ENCODE measurements at regions of chrX and their contacts with region 1.

Region 1: DNA sequence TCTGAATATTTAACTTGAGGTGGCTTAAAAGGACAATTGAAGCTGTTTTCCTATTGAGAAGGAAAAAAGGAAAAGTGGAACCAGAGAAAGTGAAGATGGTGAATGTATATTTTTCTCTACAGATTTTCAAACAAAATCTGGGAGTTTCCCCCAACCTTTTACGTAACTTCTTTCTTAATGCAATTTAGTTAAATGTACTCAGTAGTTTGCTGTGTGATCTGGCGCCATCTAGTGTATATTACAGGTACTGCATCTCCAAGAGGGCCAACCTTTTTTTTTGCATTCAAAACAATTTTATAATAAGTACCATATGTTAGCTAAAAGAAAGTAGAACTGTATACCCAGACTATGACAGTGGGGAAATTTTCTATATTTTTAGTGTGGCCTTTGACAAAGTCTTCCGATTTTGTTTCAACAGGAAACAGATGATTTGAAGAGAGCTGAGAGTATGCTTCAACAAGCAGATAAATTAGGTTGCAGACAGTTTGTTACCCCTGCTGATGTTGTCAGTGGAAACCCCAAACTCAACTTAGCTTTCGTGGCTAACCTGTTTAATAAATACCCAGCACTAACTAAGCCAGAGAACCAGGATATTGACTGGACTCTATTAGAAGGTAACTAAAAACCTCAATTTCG is 82.0 kb downstream of the PLS3 start:
- DNase-seq: no peak
- ATAC-seq: no peak

Region 2: GRCh38 chrX:115330498-115331168 is 312.4 kb before region 1 on chrX:
- intact Hi-C with region 1: loop called (anchors 1 kb)
- DNase-seq: no peak
- ATAC-seq: no peak

Region 3: GRCh38 chrX:115573185-115573584 is 69.8 kb before region 1 on chrX:
- intact Hi-C with region 1: no loop called
- DNase-seq: no peak
- ATAC-seq: peak; percentile 46

Region 4: GRCh38 chrX:115606861-115607260 is 36.2 kb before region 1 on chrX:
- intact Hi-C with region 1: no loop called
- DNase-seq: no peak
- ATAC-seq: no peak

Region 5: GRCh38 chrX:115690511-115691216 is 47.7 kb after region 1 on chrX:
- intact Hi-C with region 1: loop called (anchors 5 kb)
- DNase-seq: no peak
- ATAC-seq: peak; percentile 67